Colonic mucosa (tissue), 4 donors: ENCODE measurements at regions of chr15 and their contacts with region 1.

Region 1: GRCh38 chr15:56245871-56246814 is 2.5 kb upstream of the RFX7 start:
- DNase-seq: peak; percentile 94
- H3K4me3 ChIP-seq: peak overlapping the region; percentile 4
- H3K27ac ChIP-seq: peak overlapping the region; percentile 59
- H3K4me1 ChIP-seq: peaks cover 9% of the 10 kb centered on the region
- H3K27me3 ChIP-seq: no peaks in the 10 kb centered on the region
- CTCF ChIP-seq: peak; percentile 99

Region 2: GRCh38 chr15:55586808-55587207 is 659.3 kb before region 1 on chr15:
- intact Hi-C with region 1: no loop called
- DNase-seq: no peak
- H3K4me3 ChIP-seq: no peak overlapping the region
- H3K27ac ChIP-seq: no peak overlapping the region
- H3K4me1 ChIP-seq: no peaks in the 10 kb centered on the region
- H3K27me3 ChIP-seq: peaks cover 15% of the 10 kb centered on the region
- CTCF ChIP-seq: no peak

Region 3: DNA sequence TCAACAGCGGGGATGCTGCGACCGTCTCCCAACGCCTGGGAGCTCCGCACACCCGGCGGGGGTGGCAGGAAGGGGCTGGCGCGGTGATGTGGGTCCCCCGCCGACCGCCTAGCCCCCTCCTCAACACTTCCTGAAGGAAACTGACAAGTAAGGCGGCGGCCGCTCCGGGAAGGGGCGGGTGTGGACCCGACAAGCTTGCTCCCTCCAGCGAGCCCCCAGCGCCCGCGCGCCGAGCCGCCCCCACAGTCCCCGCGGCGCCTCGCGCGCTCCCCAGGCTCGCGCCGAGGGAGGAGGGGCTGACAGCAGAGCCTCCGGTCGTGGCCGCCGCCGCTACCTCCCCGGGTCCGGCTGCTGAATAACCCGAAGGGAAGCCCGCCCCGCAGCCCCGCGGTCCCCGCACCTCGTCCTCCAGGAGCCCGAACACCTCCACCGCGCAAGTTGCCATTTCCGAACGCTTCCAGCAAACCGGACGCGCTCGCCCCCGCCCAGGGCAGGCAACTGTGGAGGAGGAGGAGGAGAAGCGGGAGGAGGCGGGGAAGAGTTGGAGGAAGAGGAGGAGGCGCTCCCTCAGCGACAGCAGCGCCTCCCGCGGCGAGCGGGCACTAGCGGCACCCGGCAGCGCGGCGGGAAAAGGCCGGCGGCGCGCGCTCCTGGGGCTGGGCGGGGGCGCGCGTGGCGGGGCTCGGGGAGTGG is 252.9 kb before region 1 on chr15 and contains the start of gene NEDD4:
- intact Hi-C with region 1: loop called (anchors 10 kb)
- DNase-seq: peak; percentile 87
- H3K4me3 ChIP-seq: peak within 1 kb of the TSS; percentile 80
- H3K27ac ChIP-seq: peak within 1 kb of the TSS; percentile 88
- H3K4me1 ChIP-seq: peaks cover 5% of the 10 kb centered on the region
- H3K27me3 ChIP-seq: no peaks in the 10 kb centered on the region
- CTCF ChIP-seq: peak; percentile 22
- total RNA-seq, gene NEDD4: 14.5 to 15.3 TPM

Region 4: DNA sequence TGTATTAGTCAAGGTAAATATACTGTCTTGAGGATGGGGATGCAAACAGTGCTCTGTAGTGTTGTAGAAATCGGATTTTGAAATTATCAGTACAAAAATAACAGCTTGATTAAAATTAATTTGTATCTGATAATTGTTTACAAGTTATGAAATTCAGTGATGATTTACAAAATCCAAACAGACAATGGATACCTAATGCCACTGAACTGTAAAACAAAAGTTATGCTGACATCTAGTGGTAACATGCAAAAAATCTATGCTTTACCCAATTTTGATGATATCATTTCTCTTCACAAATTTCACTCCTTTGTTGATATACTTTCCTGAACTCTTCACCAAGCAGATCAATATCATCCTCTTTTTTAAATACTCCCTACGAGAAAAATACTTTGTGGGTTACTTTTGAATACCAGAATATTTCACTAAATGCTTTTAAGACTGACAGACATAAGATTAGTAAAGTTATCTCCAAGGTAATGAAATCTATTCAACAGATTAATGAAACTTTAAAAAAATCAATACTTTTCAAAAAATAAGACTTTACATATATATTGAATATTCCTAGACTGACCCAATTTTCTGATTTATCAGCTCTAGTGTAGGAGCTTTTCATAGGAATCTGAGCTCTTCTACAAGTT is 182.8 kb after region 1 on chr15:
- intact Hi-C with region 1: loop called (anchors 2 kb)
- DNase-seq: no peak
- H3K4me3 ChIP-seq: no peak overlapping the region
- H3K27ac ChIP-seq: no peak overlapping the region
- H3K4me1 ChIP-seq: no peaks in the 10 kb centered on the region
- H3K27me3 ChIP-seq: no peaks in the 10 kb centered on the region
- CTCF ChIP-seq: peak; percentile 34